CD8-positive, alpha-beta T cell (primary cell): ENCODE measurements at regions of chr20 and their contacts with region 1.

Region 1: DNA sequence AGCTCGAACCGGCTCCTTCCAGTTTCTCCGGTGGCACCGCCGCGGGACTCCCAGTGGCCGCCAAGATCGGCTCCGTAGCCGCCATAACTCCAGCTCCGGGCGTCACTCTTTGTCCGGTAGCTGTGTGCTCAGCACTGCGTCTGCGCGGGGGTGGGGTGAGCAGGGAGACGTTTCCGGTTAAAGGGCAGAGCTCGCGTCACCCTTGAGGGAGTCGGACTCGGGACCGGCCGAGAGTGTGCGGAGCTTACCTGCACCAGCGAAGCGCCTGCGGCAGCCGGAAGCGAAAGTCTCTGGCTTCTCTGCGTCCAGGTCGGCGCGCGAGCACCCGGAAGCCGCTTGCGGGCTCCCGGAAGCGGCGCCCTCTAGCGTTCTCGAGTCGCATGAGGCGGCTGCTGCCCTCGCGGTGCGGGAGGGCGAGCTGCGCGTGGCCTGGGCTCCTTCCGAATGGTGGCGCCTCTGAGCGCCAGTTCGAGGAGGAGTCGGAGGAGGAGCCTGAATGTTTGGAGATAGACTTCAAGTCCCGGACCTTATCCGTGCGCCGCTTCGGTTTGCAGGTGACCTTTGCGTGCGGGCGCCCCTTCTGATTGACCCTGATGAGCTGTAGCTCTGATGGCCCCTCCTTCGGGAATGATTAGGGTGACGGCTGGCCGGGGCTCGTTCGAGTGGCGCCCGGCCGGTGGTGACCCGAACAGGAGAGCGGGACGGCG is at the start of gene SCAND1:
- DNase-seq: peak; percentile 93 to 99 (median 96)
- ATAC-seq: peak; percentile 84
- H3K4me3 ChIP-seq: peak within 1 kb of the TSS; percentile 77 to 95
- H3K4me3 Mint-ChIP-seq: peak within 1 kb of the TSS; percentile 99
- H3K27ac ChIP-seq: peak within 1 kb of the TSS; percentile 99
- H3K27ac Mint-ChIP-seq: peak within 1 kb of the TSS; percentile 99
- H3K4me1 ChIP-seq: peaks cover 23% of the 10 kb centered on the region
- H3K4me1 Mint-ChIP-seq: peaks cover 25% of the 10 kb centered on the region
- H3K27me3 ChIP-seq: no peaks in the 10 kb centered on the region
- H3K27me3 Mint-ChIP-seq: no peaks in the 10 kb centered on the region
- CTCF ChIP-seq: peak; percentile 97
- total RNA-seq, gene SCAND1: 94.8 to 100 TPM

Region 2: DNA sequence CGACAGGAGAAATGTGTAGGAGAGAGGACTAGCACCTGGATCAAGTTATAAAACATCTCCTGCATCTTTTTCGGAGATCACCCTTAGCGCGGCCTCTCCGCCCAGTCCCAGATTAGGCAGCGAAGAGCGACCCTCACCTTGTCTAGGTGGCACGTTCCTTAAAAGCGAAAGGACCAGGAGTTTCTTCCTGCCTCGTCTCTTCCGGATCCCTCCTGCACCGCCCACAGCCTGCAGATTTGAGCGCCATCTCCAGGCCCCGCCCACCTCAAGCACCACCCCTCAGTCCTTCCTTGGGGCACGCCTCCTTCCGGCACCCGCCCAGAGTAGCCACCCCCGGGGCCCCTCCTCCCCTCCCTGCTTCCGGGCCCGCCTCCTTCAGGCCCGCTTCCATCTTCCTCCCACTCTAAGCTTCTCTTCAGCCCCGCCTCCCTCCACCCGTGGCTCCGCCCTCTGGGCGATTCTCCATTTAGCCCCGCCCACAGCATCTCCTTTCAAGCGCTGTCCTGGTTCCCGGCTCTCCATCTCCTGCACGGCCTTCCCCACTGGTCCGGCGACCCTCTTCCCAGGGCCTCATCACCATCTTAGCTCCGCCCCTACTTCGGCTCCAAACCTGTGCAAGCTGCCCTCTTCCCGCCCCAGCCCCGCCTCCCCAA is 1961.3 kb before region 1 on chr20:
- CTCF ChIA-PET with region 1: no interaction called
- POLR2A ChIA-PET with region 1: interaction called, 10 read pairs
- intact Hi-C with region 1: no loop called
- DNase-seq: peak; percentile 98 to 100 (median 99)
- ATAC-seq: peak; percentile 84
- H3K4me3 ChIP-seq: peak overlapping the region; percentile 97 to 98
- H3K4me3 Mint-ChIP-seq: peak overlapping the region; percentile 98
- H3K27ac ChIP-seq: peak overlapping the region; percentile 86 to 94
- H3K27ac Mint-ChIP-seq: peak overlapping the region; percentile 98
- H3K4me1 ChIP-seq: peaks cover 41% of the 10 kb centered on the region
- H3K4me1 Mint-ChIP-seq: peaks cover 59% of the 10 kb centered on the region
- H3K27me3 ChIP-seq: no peaks in the 10 kb centered on the region
- H3K27me3 Mint-ChIP-seq: no peaks in the 10 kb centered on the region
- CTCF ChIP-seq: no peak

Region 3: GRCh38 chr20:34825530-34826362 is 1128.6 kb before region 1 on chr20 and contains the start of gene NCOA6:
- CTCF ChIA-PET with region 1: no interaction called
- POLR2A ChIA-PET with region 1: no interaction called
- intact Hi-C with region 1: loop called in 1 of 2 experiments (anchors 10 kb)
- DNase-seq: peak; percentile 76 to 92 (median 85)
- ATAC-seq: peak; percentile 71
- H3K4me3 ChIP-seq: peak within 1 kb of the TSS; percentile 87 to 89
- H3K4me3 Mint-ChIP-seq: peak within 1 kb of the TSS; percentile 98
- H3K27ac ChIP-seq: peak within 1 kb of the TSS; percentile 38 to 67
- H3K27ac Mint-ChIP-seq: peak within 1 kb of the TSS; percentile 97
- H3K4me1 ChIP-seq: peaks cover 21% of the 10 kb centered on the region
- H3K4me1 Mint-ChIP-seq: peaks cover 41% of the 10 kb centered on the region
- H3K27me3 ChIP-seq: no peaks in the 10 kb centered on the region
- H3K27me3 Mint-ChIP-seq: peaks cover 2% of the 10 kb centered on the region
- CTCF ChIP-seq: no peak
- total RNA-seq, gene NCOA6: 13.0 to 13.5 TPM

Region 4: GRCh38 chr20:35541783-35542588 is 412.4 kb before region 1 on chr20 and contains the start of gene ERGIC3:
- CTCF ChIA-PET with region 1: no interaction called
- POLR2A ChIA-PET with region 1: no interaction called
- intact Hi-C with region 1: loop called in 1 of 2 experiments (anchors 2 kb)
- DNase-seq: peak; percentile 93 to 98 (median 97)
- ATAC-seq: peak; percentile 97
- H3K4me3 ChIP-seq: peak within 1 kb of the TSS; percentile 81 to 94
- H3K4me3 Mint-ChIP-seq: peak within 1 kb of the TSS; percentile 89
- H3K27ac ChIP-seq: peak within 1 kb of the TSS; percentile 71 to 86
- H3K27ac Mint-ChIP-seq: peak within 1 kb of the TSS; percentile 89
- H3K4me1 ChIP-seq: peaks cover 14% of the 10 kb centered on the region
- H3K4me1 Mint-ChIP-seq: peaks cover 27% of the 10 kb centered on the region
- H3K27me3 ChIP-seq: no peaks in the 10 kb centered on the region
- H3K27me3 Mint-ChIP-seq: no peaks in the 10 kb centered on the region
- CTCF ChIP-seq: no peak
- total RNA-seq, gene ERGIC3: 149 TPM

Region 5: DNA sequence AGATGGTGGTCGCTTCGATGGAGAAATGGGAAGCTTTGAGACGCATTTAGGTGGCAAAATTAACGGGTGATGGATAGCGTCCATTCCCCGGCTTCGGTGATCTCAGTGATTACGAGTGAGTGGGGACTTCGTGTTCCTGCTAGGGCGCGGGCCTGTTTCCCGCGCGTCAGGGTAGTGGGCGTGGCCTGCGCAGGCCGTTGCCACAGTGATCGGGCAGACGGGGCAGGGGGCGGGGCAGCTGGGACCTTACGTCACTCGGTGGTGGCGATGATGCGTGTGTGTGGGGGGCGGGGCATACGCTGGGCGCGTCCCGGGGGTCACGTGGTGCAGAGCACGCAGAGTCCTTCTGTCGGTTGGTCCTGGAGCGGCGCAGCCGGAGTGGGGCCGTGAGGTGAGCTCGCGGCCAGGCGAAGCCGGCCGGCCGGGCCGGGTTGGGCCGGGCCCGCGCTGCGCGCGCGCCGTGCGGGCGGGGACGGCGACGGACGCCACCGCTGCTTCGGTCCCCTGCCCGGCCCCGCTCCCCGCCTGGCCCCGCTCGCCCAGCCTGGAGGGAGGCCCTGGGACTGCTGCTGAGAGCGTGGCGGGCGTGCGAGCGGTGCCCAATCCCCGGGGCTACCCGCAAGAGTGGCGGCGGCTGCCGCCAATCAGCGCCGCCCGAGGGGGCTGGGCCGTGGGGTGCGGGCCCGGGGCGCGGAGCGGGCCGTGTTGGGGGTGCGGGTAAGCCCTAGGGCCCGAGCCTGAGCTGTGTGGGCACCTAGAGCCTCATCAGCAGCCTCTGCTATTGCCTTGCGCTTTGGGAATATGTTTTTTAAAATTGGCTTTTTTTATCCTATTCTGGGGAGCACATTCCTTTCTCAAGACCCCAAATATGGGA is 182.4 kb before region 1 on chr20 and contains the start of gene PHF20:
- CTCF ChIA-PET with region 1: interaction called, 3 read pairs
- POLR2A ChIA-PET with region 1: interaction called, 7 read pairs
- intact Hi-C with region 1: loop called in 1 of 2 experiments (anchors 1 kb)
- DNase-seq: peak; percentile 100
- ATAC-seq: peak; percentile 82
- H3K4me3 ChIP-seq: peak within 1 kb of the TSS; percentile 65 to 71
- H3K4me3 Mint-ChIP-seq: peak within 1 kb of the TSS; percentile 91
- H3K27ac ChIP-seq: peak within 1 kb of the TSS; percentile 87 to 95
- H3K27ac Mint-ChIP-seq: peak within 1 kb of the TSS; percentile 100
- H3K4me1 ChIP-seq: peaks cover 89% of the 10 kb centered on the region
- H3K4me1 Mint-ChIP-seq: peaks cover 81% of the 10 kb centered on the region
- H3K27me3 ChIP-seq: no peaks in the 10 kb centered on the region
- H3K27me3 Mint-ChIP-seq: no peaks in the 10 kb centered on the region
- CTCF ChIP-seq: no peak
- total RNA-seq, gene PHF20: 101 to 107 TPM

Region 6: DNA sequence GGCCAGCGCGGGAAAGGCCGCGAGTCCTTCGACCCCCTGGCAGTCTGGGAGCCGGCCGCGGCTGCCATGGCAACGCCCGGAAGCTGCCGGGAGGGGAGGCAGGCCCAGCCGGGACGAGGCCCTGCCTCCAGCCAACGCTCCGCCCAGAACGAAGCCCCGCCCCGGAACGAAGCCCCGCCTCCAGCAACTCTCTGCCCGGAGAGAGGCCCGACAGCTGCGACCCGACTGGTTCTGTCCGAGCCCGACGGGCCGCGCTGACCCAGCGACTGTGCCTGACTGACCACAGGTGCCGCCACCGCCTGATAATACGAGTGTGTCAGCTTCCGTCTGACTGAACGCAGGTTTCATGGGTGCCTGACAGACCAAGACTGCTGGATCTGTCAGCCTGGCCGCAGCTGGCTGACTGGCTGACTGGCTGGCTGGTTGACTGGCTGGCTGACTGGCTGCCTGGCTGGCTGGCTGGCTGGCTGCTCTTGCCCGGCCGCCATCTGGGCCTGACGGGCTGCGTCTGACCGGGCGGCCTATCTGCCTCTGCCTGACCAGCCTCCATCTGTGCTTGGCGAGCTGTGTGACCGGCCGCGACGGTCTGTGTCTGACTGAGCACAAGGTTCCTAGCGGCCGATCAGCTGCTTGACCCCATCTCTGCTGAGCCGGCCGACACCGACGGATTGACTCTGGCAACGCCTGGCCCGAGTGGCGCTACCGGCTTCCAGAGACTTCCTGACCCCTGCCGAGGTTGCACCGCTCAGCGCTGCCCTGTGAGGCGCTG is 110.5 kb after region 1 on chr20:
- CTCF ChIA-PET with region 1: no interaction called
- POLR2A ChIA-PET with region 1: interaction called, 4 read pairs
- intact Hi-C with region 1: loop called in 1 of 2 experiments (anchors 1 kb)
- DNase-seq: peak; percentile 85 to 97 (median 93)
- ATAC-seq: peak; percentile 97
- H3K4me3 ChIP-seq: peak overlapping the region; percentile 66 to 74
- H3K4me3 Mint-ChIP-seq: peak overlapping the region; percentile 92
- H3K27ac ChIP-seq: peak overlapping the region; percentile 44 to 48
- H3K27ac Mint-ChIP-seq: peak overlapping the region; percentile 70
- H3K4me1 ChIP-seq: peaks cover 12% of the 10 kb centered on the region
- H3K4me1 Mint-ChIP-seq: peaks cover 5% of the 10 kb centered on the region
- H3K27me3 ChIP-seq: no peaks in the 10 kb centered on the region
- H3K27me3 Mint-ChIP-seq: peaks cover 6% of the 10 kb centered on the region
- CTCF ChIP-seq: no peak